ENCODE measurements at regions of chr5 and their contacts with region 1.

Region 1: DNA sequence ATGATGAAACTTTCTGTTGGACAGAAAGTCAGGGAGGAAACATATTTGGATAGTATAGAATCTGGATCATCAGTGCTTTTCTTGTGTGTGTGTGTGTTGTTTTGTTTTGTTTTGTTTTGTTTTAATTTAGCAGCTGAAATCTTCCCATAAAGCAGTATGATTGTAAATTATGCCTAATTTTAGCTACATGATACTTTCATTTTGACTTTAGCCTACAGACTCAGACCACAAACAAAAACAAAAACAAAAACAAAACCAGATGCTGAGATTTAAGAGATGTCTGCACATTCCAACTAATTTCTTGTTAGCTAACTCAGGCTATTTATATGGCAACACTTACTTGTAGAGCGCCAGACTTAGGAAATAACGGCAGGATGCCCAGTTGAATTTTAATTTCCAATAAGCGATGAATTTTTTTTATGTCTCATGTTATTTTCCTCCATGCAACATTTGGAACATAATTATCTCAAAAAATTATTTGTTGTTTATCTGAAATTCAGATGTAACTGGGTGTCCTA is 119.5 kb upstream of the TRPC7 start:
- DNase-seq: no peak
- ATAC-seq: no peak
- H3K4me3 ChIP-seq: no peak overlapping the region
- H3K27ac ChIP-seq: no peak overlapping the region
- H3K4me1 ChIP-seq: no peaks in the 10 kb centered on the region; the same call in 1 of the 2 replicates
- H3K27me3 ChIP-seq: no peaks in the 10 kb centered on the region; a peak in 1 of 4 replicates
- CTCF ChIP-seq: no peak
- EP300 ChIP-seq: no peak; a peak in 1 of 4 replicates
- POLR2A ChIP-seq: no peak
- RAD21 ChIP-seq: no peak

Region 2: DNA sequence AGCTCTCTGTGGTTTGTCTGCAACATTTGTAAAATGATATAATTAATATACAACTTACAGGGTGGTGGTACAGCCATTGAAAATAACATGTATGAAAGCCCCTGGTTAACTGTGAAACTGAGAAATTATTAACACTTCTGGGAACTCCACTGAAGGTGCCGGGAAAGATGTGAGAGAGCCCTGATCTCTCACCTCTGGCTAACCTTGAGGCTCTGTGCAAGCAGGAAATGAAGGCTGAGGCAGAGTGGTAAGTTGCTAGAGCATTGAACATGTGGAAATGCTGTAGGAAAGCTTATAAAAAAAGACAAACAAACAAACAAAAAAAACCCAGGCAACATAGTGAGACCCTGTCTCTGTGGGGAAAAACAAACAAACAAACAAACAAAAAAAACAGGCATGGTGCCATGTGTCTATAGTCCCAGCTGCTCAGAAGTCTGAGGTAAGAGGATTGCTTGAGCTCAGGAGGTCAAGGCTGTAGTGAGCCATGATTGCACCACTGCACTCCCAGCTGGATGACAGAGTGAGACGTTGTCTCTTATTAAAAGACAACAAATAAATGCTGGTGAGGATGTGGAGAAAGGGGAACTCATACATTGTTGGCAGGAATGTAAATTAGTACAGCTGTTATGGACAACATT is 1509.7 kb before region 1 on chr5:
- CTCF ChIA-PET with region 1: no interaction called
- POLR2A ChIA-PET with region 1: no interaction called
- RAD21 ChIA-PET with region 1: no interaction called
- SMC1A ChIA-PET with region 1: no interaction called
- in situ Hi-C with region 1: no loop called
- intact Hi-C with region 1: no loop called
- DNase-seq: no peak
- ATAC-seq: no peak
- H3K4me3 ChIP-seq: no peak overlapping the region
- H3K27ac ChIP-seq: no peak overlapping the region
- H3K4me1 ChIP-seq: no peaks in the 10 kb centered on the region
- H3K27me3 ChIP-seq: no peaks in the 10 kb centered on the region
- CTCF ChIP-seq: no peak
- EP300 ChIP-seq: no peak
- POLR2A ChIP-seq: no peak
- RAD21 ChIP-seq: no peak

Region 3: DNA sequence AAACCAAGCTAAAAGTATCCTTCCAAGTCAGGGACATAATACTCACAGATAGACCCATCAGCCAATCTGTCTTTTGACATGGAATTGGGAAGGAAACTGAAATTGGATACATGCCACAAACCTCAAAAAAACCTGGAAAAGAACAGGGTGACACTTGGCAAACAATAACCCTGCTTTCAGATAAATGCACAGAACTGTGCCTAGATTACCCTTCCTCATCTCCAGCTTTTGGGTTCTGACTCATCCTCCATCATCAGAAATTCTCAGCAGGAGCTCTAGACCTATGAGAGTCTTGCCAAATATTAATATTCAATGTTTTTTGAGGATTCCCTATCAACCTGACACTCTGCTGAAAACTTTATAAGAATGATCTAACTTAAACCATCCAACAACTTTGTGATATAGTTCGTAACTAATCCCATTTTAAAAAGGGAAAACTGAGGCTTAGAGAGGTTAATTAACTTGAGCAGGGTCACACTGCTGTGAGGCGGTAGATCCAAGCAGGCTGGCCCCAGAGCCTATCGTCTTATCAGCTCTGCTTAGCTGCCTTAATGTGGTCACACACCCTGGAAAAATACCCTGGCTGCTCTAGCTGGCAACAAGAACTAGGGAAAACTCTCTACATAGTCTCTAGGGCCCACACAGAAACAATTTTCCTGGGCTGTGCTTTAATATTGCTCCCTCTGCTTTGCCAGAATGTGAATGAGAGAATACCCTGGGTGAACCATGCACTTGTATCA is 37.5 kb after region 1 on chr5:
- CTCF ChIA-PET with region 1: no interaction called
- POLR2A ChIA-PET with region 1: no interaction called
- RAD21 ChIA-PET with region 1: no interaction called
- SMC1A ChIA-PET with region 1: no interaction called
- in situ Hi-C with region 1: no loop called
- intact Hi-C with region 1: loop called (anchors 1 kb)
- DNase-seq: no peak
- ATAC-seq: no peak
- H3K4me3 ChIP-seq: no peak overlapping the region
- H3K27ac ChIP-seq: no peak overlapping the region
- H3K4me1 ChIP-seq: no peaks in the 10 kb centered on the region
- H3K27me3 ChIP-seq: no peaks in the 10 kb centered on the region
- CTCF ChIP-seq: no peak
- EP300 ChIP-seq: no peak
- POLR2A ChIP-seq: no peak
- RAD21 ChIP-seq: no peak

Measured in GM12878 (cell line).